ENCODE measurements at regions of chr17 and their contacts with region 1.

Region 1: GRCh38 chr17:45073414-45074070 is 12.4 kb downstream of the NMT1 start:
- DNase-seq: peak in 1 of 2 experiments; percentile 21
- H3K4me3 ChIP-seq: no peak overlapping the region
- H3K4me3 Mint-ChIP-seq: no peak overlapping the region
- H3K27ac Mint-ChIP-seq: peak overlapping the region; percentile 73
- H3K4me1 ChIP-seq: no peaks in the 10 kb centered on the region
- H3K4me1 Mint-ChIP-seq: no peaks in the 10 kb centered on the region
- H3K27me3 ChIP-seq: no peaks in the 10 kb centered on the region
- H3K27me3 Mint-ChIP-seq: no peaks in the 10 kb centered on the region
- CTCF ChIP-seq: no peak

Region 2: GRCh38 chr17:45022288-45022648 is 51.3 kb before region 1 on chr17:
- CTCF ChIA-PET with region 1: no interaction called
- POLR2A ChIA-PET with region 1: no interaction called
- intact Hi-C with region 1: no loop called
- DNase-seq: no peak
- H3K4me3 ChIP-seq: 0 out of 2 replicates have a peak overlapping the region, but pooled peaks have one; percentile 11
- H3K4me3 Mint-ChIP-seq: no peak overlapping the region
- H3K27ac Mint-ChIP-seq: no peak overlapping the region
- H3K4me1 ChIP-seq: peaks cover 18% of the 10 kb centered on the region
- H3K4me1 Mint-ChIP-seq: peaks cover 17% of the 10 kb centered on the region
- H3K27me3 ChIP-seq: no peaks in the 10 kb centered on the region
- H3K27me3 Mint-ChIP-seq: peaks cover 6% of the 10 kb centered on the region
- CTCF ChIP-seq: no peak

Region 3: DNA sequence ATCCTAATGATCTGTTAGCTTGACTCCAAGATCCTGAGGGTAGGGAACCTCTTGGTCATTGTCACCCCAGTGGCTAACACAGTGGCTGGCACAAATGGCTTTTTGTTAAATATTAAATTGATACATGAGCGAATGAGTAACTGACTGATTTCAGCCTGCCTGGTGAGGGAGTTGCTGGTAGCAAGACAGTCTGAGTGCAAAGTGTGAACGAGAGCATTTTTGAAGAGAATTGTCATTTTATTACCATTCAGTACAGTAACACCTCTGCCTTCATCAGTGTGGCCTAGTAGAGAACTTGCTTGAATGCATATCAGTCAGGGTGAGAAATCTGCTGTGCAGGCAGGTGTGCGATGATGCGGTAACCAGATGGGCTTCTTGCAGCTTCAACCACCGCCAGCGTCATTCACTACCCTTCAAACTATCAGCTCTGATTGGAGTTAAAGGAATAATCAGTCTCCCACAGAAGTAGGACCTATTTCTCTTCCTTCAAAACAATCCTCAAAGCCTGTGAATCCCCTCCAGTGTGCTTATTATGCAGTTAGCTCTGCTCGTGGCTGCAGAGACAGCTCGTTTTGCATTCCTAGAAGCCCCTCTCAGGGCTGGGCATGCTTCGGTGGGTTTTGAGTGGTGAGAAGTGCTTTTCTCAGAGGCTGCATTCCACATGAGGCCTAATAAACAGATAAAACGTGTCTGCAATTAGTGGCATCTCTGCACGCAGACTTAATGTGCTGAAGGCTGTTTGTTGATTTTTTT is 117.1 kb after region 1 on chr17:
- CTCF ChIA-PET with region 1: no interaction called
- POLR2A ChIA-PET with region 1: interaction called, 10 read pairs
- intact Hi-C with region 1: no loop called
- DNase-seq: no peak
- H3K4me3 ChIP-seq: no peak overlapping the region
- H3K4me3 Mint-ChIP-seq: no peak overlapping the region
- H3K27ac Mint-ChIP-seq: no peak overlapping the region
- H3K4me1 ChIP-seq: peaks cover 14% of the 10 kb centered on the region; the same call in 1 of the 2 replicates
- H3K4me1 Mint-ChIP-seq: no peaks in the 10 kb centered on the region
- H3K27me3 ChIP-seq: no peaks in the 10 kb centered on the region
- H3K27me3 Mint-ChIP-seq: no peaks in the 10 kb centered on the region
- CTCF ChIP-seq: no peak